Activated T-helper 1 cell treated with anti-CD3 and anti-CD28 coated beads, Interleukin-12 subunit alpha, Interleukin-12 subunit beta, Interleukin-2, Interleukin-4 antibody, amounts not matched to agents 30 ng/mL and 10 ng/mL and 1 ng/mL, durations not matched to agents 14 hours and 24 hours and 36 hours (primary cell): ENCODE measurements at regions of chr1 and their contacts with region 1.

Region 1: GRCh38 chr1:209248649-209249279 is 334.8 kb upstream of the CAMK1G start:
- DNase-seq: peak; percentile 6
- H3K4me3 Mint-ChIP-seq: no peak overlapping the region
- H3K27ac Mint-ChIP-seq: no peak overlapping the region
- H3K4me1 Mint-ChIP-seq: no peaks in the 10 kb centered on the region
- H3K27me3 Mint-ChIP-seq: peaks cover 2% of the 10 kb centered on the region

Region 2: GRCh38 chr1:208652296-208653160 is 596.2 kb before region 1 on chr1:
- intact Hi-C with region 1: loop called (anchors 1 kb)
- DNase-seq: peak; percentile 5
- H3K4me3 Mint-ChIP-seq: no peak overlapping the region
- H3K27ac Mint-ChIP-seq: no peak overlapping the region
- H3K4me1 Mint-ChIP-seq: no peaks in the 10 kb centered on the region
- H3K27me3 Mint-ChIP-seq: peaks cover 11% of the 10 kb centered on the region

Region 3: DNA sequence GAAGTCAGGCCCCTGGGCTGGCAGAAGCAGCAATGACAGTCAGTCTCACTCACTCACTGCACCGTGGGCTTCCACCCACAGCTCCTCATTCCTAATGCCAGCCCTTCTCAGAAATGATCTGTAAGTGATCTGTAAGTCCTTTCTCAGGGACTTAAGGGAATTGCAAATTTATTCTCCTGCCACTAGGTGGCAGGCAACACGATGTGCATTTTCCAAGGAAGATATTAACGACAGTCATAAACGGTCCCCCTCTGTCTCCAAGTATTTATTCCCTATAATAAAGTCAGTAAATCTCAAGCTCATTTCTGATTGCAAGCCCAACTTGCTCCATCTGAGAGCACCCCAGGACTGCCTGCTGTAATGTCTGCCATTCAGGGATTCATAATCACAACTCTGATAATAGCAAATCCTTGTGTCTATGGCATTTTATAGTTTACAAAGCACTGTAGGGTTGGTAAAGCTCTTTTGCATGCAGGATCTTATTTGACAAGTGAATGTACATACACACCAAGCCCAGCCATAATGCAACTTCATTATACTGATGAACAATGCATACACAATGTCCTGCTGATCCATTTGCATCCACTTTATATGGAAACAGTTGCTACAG is 45.8 kb before region 1 on chr1:
- intact Hi-C with region 1: loop called (anchors 2 kb)
- DNase-seq: no peak
- H3K4me3 Mint-ChIP-seq: no peak overlapping the region
- H3K27ac Mint-ChIP-seq: no peak overlapping the region
- H3K4me1 Mint-ChIP-seq: no peaks in the 10 kb centered on the region
- H3K27me3 Mint-ChIP-seq: peaks cover 21% of the 10 kb centered on the region

Region 4: DNA sequence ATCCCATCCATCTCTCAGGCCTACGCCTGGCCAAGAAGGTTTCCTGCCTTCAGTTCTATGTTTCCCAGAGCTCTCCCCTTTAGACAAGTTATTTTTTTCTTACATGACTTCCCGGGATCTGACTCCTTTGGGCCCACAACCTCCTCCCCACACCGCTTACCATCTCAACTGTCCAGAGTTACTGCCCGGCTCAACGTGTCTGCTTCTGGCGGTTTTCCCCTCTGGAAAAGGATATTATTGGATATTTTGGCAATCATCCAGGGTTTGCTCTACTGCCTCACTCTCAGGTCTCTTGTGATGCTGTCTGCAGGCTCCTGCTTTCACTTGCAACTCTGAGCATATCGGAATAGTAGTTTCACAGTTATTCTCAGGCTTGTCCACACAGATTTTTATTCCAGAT is 16.5 kb after region 1 on chr1:
- intact Hi-C with region 1: no loop called
- DNase-seq: no peak
- H3K4me3 Mint-ChIP-seq: no peak overlapping the region
- H3K27ac Mint-ChIP-seq: no peak overlapping the region
- H3K4me1 Mint-ChIP-seq: no peaks in the 10 kb centered on the region
- H3K27me3 Mint-ChIP-seq: peaks cover 3% of the 10 kb centered on the region

Region 5: GRCh38 chr1:209455145-209455544 is 206.4 kb after region 1 on chr1:
- intact Hi-C with region 1: no loop called
- DNase-seq: no peak
- H3K4me3 Mint-ChIP-seq: no peak overlapping the region
- H3K27ac Mint-ChIP-seq: no peak overlapping the region
- H3K4me1 Mint-ChIP-seq: no peaks in the 10 kb centered on the region
- H3K27me3 Mint-ChIP-seq: peaks cover 5% of the 10 kb centered on the region